Motor neuron (in vitro differentiated cells): ENCODE measurements at regions of chr1 and their contacts with region 1.

Region 1: DNA sequence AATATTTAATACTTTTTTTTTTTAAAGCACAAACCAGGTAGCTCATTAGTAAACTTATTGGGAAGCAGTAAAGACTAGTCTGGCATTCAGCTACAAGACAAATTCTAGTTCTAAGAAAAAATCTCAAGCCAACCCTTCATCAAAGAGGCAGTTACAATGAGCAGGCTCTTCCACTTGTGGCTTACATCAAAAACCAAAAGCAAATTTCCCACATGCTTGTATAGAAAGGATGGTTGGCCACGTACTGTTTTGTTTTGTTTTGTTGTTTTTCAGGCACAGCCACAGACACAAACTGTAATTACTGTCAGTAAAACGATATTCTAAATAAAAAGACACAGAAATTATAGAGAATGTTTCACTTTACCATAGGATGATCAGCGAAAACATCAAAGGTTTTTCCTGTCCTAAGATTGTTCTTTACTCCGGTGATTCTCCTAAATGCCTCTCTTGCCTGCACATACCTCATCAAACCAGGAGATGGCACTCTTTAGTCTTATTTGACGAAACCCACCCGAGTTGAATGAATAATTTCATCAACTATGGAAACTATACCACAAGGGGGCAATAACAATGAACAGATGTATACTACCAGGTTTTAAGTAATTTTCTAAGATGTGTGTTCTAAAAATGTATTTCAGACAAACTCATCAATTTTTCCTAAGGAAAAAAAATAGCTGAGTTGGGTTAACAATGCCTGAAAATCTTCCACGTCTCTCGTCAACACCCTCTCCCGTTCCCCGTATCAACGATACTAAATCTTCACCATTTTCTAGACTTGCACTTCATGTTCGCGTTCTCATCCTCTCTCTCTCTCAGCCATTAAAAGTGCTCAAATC is 26.9 kb downstream of the RPL5 start:
- ATAC-seq: peak; percentile 58 to 94 (median 84)
- H3K4me3 ChIP-seq: no peak overlapping the region
- H3K27ac ChIP-seq: no peak overlapping the region
- H3K4me1 ChIP-seq: no peaks in the 10 kb centered on the region

Region 2: DNA sequence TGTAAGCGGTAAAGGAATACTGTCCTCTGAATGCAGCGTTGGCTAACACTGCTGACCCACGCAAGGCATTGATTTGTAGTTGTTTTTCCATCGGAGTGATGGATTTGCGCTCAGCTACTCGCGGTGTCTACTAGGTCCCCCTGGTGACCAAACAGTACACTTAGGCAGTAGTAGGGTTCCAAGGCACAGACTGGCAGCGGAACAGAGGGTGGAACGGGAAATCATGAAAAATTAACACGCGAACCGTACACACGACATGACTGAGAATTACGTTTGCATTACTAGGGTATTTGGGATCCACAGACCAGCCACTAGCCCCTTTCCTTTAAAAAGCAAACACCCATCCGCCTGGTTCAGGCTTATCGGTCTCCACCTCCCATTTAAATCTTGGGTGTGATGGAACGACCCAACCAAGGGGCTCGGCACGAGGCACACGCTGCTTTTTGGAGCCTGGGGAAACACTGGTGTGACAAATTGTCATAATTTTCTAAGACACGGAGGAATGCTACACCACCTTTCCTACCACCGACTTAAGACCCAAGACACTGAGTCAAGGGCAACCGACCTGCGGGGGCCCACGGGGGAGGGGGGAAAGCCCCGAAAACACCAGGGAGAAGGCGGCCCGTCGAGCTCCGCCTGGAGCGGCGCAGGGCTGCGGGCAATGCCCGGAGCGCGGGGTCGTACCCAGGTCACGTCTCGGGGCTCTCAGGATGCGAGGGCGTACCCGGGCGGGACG is 101.8 kb after region 1 on chr1:
- in situ Hi-C with region 1: loop called in 1 of 9 experiments (anchors 25 kb)
- ATAC-seq: peak; percentile 48 to 60 (median 58)
- H3K4me3 ChIP-seq: peak overlapping the region; percentile 53 to 82 (median 67)
- H3K27ac ChIP-seq: peak overlapping the region; percentile 66 to 78
- H3K4me1 ChIP-seq: peaks cover 0 to 4% of the 10 kb centered on the region in 2 donors

Region 3: DNA sequence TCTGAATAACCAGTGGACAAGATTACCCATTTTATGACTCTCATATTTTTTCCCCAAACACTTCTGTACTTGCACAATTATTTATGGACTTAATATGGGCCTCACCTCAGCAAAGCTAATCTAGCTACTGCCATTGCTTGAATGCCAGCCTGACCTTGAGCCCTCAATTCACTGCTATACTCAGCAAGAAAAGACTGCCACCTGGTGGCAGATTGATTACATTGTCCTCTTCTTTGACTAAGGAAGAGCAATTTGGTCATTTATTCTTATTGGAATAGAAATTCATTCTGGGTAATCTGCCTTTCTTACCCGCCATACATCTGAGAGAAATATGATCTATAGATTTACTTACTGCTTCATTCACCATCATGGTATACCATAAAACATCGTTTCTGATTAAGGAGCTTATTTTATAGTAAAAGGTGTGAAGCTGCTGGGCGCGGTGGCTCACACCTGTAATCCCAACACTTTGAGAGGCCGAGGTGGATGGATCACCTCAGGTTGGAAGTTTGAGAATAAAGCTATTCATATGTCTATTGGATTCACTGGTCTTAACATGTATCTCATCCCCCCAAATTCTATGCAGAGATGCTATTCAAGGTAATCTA is 135.4 kb after region 1 on chr1:
- in situ Hi-C with region 1: loop called in 8 of 9 experiments (anchors 5 to 25 kb)
- ATAC-seq: peak; percentile 82 to 96 (median 90)
- H3K4me3 ChIP-seq: no peak overlapping the region
- H3K27ac ChIP-seq: no peak overlapping the region
- H3K4me1 ChIP-seq: no peaks in the 10 kb centered on the region

Region 4: GRCh38 chr1:93015590-93015989 is 156.8 kb after region 1 on chr1:
- in situ Hi-C with region 1: no loop called
- ATAC-seq: peak in 2 of 8 experiments; percentile 14 to 27
- H3K4me3 ChIP-seq: no peak overlapping the region
- H3K27ac ChIP-seq: no peak overlapping the region
- H3K4me1 ChIP-seq: peaks cover 8 to 13% of the 10 kb centered on the region in 2 donors